ENCODE measurements at regions of chr7 and their contacts with region 1.

Region 1: GRCh38 chr7:68288144-68288593 is 1291.5 kb downstream of the TYW1 start:
- DNase-seq: no peak
- H3K4me3 ChIP-seq: no peak overlapping the region
- H3K27ac ChIP-seq: no peak overlapping the region
- H3K4me1 ChIP-seq: no peaks in the 10 kb centered on the region
- H3K27me3 ChIP-seq: no peaks in the 10 kb centered on the region
- CTCF ChIP-seq: no peak
- POLR2A ChIP-seq: no peak

Region 2: DNA sequence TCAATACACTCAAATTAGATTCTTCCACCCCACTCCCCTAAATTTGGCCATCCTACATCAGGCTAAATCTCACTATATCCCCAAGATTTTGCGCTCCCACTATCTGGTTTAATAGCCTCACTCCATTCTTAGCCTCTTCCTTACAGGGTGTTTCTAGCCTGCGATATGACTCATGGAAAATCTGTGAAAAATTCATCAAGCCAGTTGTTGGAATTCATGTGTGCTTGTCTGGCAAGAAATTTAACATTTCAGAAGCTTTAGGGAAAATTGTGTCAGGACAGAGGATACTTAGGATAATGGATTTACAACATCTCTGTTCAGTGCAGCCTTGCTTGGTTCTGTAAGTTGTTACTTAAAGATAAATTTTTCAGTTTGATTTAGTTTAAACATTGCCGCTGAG is 60.2 kb after region 1 on chr7:
- intact Hi-C with region 1: loop called (anchors 2 kb)
- DNase-seq: no peak
- H3K4me3 ChIP-seq: no peak overlapping the region
- H3K27ac ChIP-seq: no peak overlapping the region
- H3K4me1 ChIP-seq: no peaks in the 10 kb centered on the region
- H3K27me3 ChIP-seq: no peaks in the 10 kb centered on the region
- CTCF ChIP-seq: no peak
- POLR2A ChIP-seq: no peak

Measured in vagina (tissue), 2 donors.